ENCODE measurements at regions of chr10 and their contacts with region 1.

Region 1: DNA sequence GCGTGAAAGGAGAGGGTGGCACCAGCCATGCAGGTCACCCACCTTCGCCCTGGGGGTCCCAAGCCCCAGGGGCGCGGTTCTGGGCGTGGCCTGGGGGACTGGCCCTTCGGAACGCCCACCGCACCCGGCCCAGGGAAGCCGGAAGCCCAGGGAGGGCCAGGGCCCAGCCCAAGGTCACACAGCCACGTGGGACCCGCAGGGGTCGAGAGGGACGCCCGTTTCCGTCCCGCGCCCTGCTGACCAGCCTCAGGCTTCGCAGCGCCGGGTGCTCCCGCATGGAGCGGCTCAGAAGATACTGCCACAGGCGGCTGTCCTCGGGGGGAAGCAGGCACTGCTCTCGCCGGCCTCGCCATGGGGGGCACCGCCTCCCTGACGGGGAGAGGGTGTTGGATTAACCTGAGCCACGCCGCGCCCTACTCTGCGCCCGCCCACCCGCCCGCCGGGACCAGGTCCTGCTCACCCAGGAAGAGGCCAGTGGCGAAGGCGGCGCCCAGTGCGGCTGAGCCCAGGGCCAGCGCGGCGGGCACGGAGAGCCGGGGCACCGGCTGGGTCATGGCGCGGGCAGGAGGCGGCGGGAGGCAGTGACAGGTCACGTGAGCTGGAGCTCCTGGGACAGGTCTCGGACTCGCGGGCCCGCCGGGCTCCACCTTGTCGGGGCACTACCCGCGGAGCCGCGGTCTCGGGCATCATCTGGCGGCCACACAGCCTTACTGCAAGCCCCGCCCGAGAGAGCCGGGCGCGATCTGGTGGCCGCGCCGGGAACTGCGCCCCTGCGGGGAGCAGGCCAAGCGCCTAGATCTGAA is at the start of gene COMTD1:
- DNase-seq: no peak
- H3K4me3 ChIP-seq: peak within 1 kb of the TSS; percentile 71
- CTCF ChIP-seq: peak; percentile 100

Region 2: GRCh38 chr10:74244097-74244685 is 991.4 kb before region 1 on chr10:
- CTCF ChIA-PET with region 1: interaction called, 67 read pairs
- POLR2A ChIA-PET with region 1: no interaction called
- DNase-seq: no peak
- H3K4me3 ChIP-seq: no peak overlapping the region
- CTCF ChIP-seq: peak; percentile 12

Region 3: DNA sequence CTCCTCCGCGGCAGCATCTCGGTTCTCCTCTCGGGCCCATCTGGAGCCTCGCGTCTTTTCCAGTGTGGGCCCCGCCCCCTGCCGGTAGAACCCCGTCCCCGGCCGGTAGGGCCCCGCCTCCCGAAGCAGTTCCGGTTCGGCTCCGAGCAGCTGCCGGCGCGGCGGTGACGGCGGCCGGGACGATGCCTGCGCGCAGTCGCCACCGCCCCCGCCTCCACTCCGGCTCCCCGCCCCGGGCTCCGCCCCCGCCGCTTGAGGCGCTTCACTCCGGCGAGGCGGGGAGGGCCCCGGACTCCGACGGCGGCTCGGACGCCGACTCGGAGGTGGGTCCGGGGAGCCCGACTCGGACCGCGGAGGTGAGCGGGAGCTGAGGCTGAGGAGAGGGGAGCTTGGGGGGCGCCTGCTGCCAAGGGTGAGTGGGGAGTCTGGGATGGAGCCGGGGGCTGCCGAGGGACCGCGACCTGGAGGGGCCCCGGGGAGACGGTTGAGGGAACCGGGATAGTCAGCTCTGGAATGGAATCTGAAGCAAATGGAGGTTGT is 124.1 kb before region 1 on chr10 and contains the start of gene SAMD8:
- CTCF ChIA-PET with region 1: interaction called, 91 read pairs
- POLR2A ChIA-PET with region 1: interaction called, 3 read pairs
- DNase-seq: peak; percentile 71
- H3K4me3 ChIP-seq: peak within 1 kb of the TSS; percentile 82
- CTCF ChIP-seq: no peak

Region 4: GRCh38 chr10:75195035-75195763 is 40.4 kb before region 1 on chr10:
- CTCF ChIA-PET with region 1: interaction called, 302 read pairs
- POLR2A ChIA-PET with region 1: interaction called, 4 read pairs
- DNase-seq: peak; percentile 76
- H3K4me3 ChIP-seq: no peak overlapping the region
- CTCF ChIP-seq: no peak

Region 5: DNA sequence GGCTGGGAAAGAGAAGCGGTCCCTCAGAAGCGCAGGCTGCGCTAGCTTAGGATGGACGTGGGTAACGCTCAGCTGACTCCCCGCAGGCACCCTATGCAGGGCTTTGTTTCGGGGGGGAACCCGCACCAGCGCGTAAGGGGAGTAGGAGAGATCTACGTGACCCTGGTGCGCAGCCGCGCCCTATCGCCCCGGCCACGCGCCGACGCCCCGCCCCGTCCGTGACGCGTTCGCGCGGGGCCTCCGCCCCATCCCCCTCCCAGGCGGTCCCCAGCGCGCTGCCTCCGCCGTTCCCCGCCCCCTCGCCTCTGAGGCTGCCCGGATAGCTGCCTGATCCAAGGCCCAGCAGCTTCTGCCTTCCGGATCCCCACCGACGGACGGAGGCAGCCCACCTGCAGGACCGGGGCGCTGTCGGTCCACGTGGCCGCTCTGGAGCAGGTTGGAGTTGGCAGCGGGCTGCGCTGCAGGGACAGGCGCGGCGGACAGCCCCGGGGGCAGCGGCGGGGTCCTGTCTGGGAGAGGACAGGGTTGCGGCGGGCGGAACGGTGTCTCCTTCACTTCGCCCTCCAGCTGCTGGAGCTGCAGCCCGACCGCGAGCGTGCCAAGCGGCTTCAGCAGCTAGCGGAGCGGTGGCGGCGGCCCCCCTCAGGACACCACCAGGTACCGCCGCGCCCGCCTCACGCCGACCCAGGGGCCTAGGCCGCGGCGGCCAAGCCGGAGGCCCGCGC is 25.1 kb before region 1 on chr10 and contains the start of gene VDAC2:
- CTCF ChIA-PET with region 1: interaction called, 39 read pairs
- POLR2A ChIA-PET with region 1: interaction called, 6 read pairs
- DNase-seq: no peak
- H3K4me3 ChIP-seq: peak within 1 kb of the TSS; percentile 87
- CTCF ChIP-seq: no peak

Region 6: GRCh38 chr10:75525646-75526045 is 290.1 kb after region 1 on chr10:
- CTCF ChIA-PET with region 1: no interaction called
- POLR2A ChIA-PET with region 1: no interaction called
- DNase-seq: no peak
- H3K4me3 ChIP-seq: no peak overlapping the region
- CTCF ChIP-seq: no peak